Astrocyte of the cerebellum (primary cell): ENCODE measurements at regions of chr12 and their contacts with region 1.

Region 1: DNA sequence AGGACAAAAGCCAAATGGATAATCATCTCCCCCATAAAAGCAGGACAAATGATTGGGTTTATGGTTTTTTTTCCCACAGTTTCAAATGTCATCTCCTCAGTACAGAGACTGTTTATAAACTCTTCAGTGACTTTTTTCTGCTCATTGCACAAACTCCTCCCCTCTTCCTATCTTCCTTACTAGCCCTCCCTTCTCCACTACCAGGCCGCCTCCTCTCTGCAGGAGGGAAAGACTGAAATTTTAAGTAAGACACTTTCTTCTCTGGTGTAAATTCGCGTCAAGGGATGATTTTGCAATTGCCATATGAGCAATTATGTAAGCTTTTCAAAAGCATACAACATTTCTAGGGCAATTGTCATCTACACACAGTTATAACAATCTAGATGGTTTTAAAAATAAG is 37.0 kb downstream of the BTG1 start:
- DNase-seq: peak; percentile 11
- H3K4me3 ChIP-seq: no peak overlapping the region
- CTCF ChIP-seq: no peak

Region 2: DNA sequence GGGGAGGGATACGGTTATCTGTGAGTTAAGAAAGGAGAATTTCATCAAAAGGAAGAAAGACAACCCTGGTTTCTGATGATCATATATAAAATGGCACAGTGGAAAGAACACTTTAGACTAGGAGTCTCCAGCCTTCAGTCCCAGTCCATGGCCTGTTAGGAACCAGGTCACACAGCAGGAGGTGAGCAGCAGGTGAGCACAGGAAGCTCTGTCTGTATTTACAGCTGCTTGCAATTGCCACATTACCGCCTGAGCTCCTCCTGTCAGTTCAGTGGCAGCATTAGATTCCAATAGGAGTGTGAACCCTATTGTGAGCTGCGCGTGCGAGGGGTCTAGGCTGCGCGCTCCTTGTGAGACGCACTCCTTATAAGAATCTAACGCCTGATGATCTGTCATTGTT is 100.9 kb before region 1 on chr12:
- in situ Hi-C with region 1: loop called (anchors 5 kb)
- DNase-seq: no peak
- H3K4me3 ChIP-seq: no peak overlapping the region
- CTCF ChIP-seq: no peak

Region 3: DNA sequence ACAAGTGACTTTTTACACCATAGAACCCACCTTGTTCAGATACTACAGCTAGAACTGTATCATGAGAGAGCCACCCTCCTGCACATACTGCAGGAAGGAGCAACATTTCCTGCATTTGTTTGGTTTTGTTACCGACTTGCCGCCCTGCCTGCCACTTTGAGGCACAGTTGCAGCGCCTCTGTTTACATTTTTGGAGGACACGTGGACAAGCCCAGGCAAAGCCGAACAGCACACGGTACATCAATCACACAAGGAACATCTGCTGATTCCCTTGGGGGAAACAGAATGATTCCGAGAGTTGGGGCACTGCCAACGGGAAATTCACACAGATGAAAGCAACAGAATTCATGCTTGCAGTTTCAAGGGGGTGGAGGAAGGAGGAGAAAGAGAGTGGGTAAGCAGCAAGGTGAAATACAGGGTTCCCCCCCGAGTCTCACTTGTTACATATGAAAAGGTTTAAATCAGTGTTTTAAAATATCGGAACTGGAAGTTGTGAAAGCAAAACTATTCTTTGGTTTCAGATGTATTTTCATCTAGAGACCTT is 73.7 kb before region 1 on chr12:
- in situ Hi-C with region 1: no loop called
- DNase-seq: no peak
- H3K4me3 ChIP-seq: peak overlapping the region; percentile 25
- CTCF ChIP-seq: no peak